Mammary epithelial cell (primary cell): ENCODE measurements at regions of chr3 and their contacts with region 1.

Region 1: GRCh38 chr3:53382106-53382505 is 34.8 kb upstream of the DCP1A start:
- DNase-seq: peak; percentile 47
- H3K4me3 ChIP-seq: no peak overlapping the region
- H3K27ac ChIP-seq: no peak overlapping the region
- H3K4me1 ChIP-seq: no peaks in the 10 kb centered on the region
- H3K27me3 ChIP-seq: no peaks in the 10 kb centered on the region
- CTCF ChIP-seq: no peak

Region 2: GRCh38 chr3:53422954-53423698 is 41.0 kb after region 1 on chr3:
- CTCF ChIA-PET with region 1: no interaction called
- dilution Hi-C with region 1: loop called (anchors 5 kb)
- in situ Hi-C with region 1: no loop called
- intact Hi-C with region 1: no loop called
- DNase-seq: no peak
- H3K4me3 ChIP-seq: no peak overlapping the region
- H3K27ac ChIP-seq: no peak overlapping the region
- H3K4me1 ChIP-seq: no peaks in the 10 kb centered on the region
- H3K27me3 ChIP-seq: peaks cover 4% of the 10 kb centered on the region
- CTCF ChIP-seq: no peak

Region 3: GRCh38 chr3:53823026-53823955 is 441.2 kb after region 1 on chr3:
- CTCF ChIA-PET with region 1: no interaction called
- dilution Hi-C with region 1: no loop called
- in situ Hi-C with region 1: no loop called
- intact Hi-C with region 1: no loop called
- DNase-seq: no peak
- H3K4me3 ChIP-seq: no peak overlapping the region
- H3K27ac ChIP-seq: no peak overlapping the region
- H3K4me1 ChIP-seq: no peaks in the 10 kb centered on the region
- H3K27me3 ChIP-seq: no peaks in the 10 kb centered on the region
- CTCF ChIP-seq: no peak